Right ventricle myocardium inferior (tissue), 1 donor: ENCODE measurements at regions of chr3 and their contacts with region 1.

Region 1: DNA sequence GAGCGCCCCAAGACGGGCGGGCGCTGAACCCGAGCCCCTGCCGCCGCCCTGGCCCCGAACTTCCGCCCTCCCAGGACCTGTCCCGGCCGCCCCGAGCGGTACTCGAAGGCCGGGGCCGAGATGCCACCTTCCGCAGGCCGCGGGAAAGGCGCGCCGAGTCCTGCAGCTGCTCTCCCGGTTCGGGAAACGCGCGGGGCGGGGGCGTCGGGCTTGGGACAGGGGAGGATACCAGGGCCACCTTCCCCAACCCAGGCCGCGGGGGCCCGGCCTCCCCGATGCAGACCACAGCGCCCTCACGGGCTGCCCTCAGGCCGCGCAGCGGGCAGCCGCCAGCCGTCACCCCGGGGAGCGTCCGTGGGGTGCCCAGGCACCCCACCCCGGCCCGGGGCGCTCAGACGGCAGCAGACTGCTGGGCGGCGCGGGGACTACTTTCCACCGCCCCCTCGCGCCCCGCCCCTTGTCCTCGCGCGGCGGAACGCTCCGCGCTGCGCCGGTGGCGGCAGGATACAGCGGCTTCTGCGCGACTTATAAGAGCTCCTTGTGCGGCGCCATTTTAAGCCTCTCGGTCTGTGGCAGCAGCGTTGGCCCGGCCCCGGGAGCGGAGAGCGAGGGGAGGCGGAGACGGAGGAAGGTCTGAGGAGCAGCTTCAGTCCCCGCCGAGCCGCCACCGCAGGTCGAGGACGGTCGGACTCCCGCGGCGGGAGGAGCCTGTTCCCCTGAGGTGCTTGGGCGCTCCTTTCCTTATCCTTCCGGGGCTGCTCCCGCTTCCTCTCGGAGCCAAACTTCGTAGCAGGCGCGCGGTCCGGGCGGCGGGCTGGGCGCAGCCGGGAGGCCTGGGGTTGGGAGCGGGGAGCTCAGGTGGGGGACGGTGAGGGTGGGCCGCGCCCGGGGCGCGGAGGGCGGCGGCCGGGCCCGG is at the start of gene CTNNB1:
- DNase-seq: peak; percentile 95
- ATAC-seq: peak; percentile 95
- total RNA-seq, gene CTNNB1: 160 TPM

Region 2: DNA sequence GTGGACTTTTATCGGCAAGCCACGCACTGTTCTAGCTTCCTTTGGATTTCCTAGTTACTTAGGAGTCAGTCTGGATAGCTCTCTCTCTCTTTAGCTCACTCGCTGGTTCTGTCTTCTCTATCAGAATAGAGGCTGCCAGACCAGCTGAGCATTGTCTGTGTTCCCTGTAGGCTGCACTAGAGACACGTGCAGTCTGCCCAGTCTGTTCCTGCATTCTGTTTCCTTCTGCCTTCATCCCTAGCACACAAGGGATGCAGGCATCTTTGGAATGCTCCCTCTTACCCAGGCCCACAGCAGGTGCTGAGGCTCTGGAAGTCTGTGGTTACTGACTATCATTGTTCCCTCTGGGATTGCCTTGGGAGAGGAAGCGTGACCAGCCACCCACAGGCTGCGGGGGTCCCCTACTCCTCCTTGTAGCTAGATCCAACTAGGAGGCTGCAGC is 351.6 kb before region 1 on chr3:
- intact Hi-C with region 1: loop called (anchors 5 kb)
- DNase-seq: no peak
- ATAC-seq: peak; percentile 87

Region 3: GRCh38 chr3:40877631-40878463 is 321.4 kb before region 1 on chr3:
- intact Hi-C with region 1: loop called (anchors 5 kb)
- DNase-seq: peak; percentile 78
- ATAC-seq: peak; percentile 87

Region 4: GRCh38 chr3:40971191-40972168 is 227.7 kb before region 1 on chr3:
- intact Hi-C with region 1: loop called (anchors 2 kb)
- DNase-seq: peak; percentile 73
- ATAC-seq: peak; percentile 92

Region 5: GRCh38 chr3:41131224-41131623 is 68.0 kb before region 1 on chr3:
- intact Hi-C with region 1: no loop called
- DNase-seq: no peak
- ATAC-seq: no peak